ENCODE measurements at regions of chr11 and their contacts with region 1.

Region 1: GRCh38 chr11:77082838-77083562 is 16.2 kb downstream of the CAPN5 start:
- DNase-seq: peak in 12 of 14 experiments; percentile 21 to 74 (median 52)
- ATAC-seq: peak; percentile 95
- H3K4me3 ChIP-seq: peak overlapping the region; percentile 33
- H3K4me3 Mint-ChIP-seq: peak overlapping the region; percentile 72
- H3K27ac ChIP-seq: peak overlapping the region; percentile 47 to 65
- H3K27ac Mint-ChIP-seq: peak overlapping the region; percentile 96
- H3K4me1 ChIP-seq: peaks cover 26% of the 10 kb centered on the region
- H3K4me1 Mint-ChIP-seq: peaks cover 18% of the 10 kb centered on the region
- H3K27me3 ChIP-seq: no peaks in the 10 kb centered on the region
- H3K27me3 Mint-ChIP-seq: no peaks in the 10 kb centered on the region
- CTCF ChIP-seq: no peak

Region 2: GRCh38 chr11:76807206-76807875 is 275.7 kb before region 1 on chr11:
- CTCF ChIA-PET with region 1: no interaction called
- POLR2A ChIA-PET with region 1: no interaction called
- intact Hi-C with region 1: loop called in 1 of 2 experiments (anchors 5 kb)
- DNase-seq: peak; percentile 34 to 80 (median 53)
- ATAC-seq: peak; percentile 37
- H3K4me3 ChIP-seq: no peak overlapping the region
- H3K4me3 Mint-ChIP-seq: peak overlapping the region; percentile 28
- H3K27ac ChIP-seq: no peak overlapping the region
- H3K27ac Mint-ChIP-seq: no peak overlapping the region
- H3K4me1 ChIP-seq: peaks cover 22% of the 10 kb centered on the region
- H3K4me1 Mint-ChIP-seq: peaks cover 40% of the 10 kb centered on the region
- H3K27me3 ChIP-seq: peaks cover 0 to 2% of the 10 kb centered on the region in 2 experiments
- H3K27me3 Mint-ChIP-seq: peaks cover 16% of the 10 kb centered on the region
- CTCF ChIP-seq: peak; percentile 71